ENCODE measurements at regions of chr1 and their contacts with region 1.

Region 1: DNA sequence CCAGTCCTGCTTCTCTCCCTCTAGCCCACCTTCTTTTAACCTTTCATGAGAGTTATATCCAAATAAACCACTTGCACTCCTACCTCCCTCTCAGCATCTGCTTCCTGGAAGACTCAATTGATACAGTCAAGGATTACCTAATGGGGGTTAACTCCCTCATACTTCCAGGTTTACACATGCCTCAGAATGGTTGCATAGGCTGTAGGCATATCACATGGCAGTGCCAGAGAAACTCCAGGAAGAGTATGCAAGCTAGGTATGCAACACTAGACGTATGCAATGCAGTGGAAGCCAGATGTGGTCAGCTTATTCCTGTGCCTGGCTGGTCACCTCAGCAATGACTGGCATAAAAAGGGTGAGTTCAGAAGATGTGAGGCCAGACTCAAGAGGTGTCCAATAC is 32.7 kb upstream of the VANGL1 start:
- DNase-seq: no peak
- ATAC-seq: no peak

Region 2: DNA sequence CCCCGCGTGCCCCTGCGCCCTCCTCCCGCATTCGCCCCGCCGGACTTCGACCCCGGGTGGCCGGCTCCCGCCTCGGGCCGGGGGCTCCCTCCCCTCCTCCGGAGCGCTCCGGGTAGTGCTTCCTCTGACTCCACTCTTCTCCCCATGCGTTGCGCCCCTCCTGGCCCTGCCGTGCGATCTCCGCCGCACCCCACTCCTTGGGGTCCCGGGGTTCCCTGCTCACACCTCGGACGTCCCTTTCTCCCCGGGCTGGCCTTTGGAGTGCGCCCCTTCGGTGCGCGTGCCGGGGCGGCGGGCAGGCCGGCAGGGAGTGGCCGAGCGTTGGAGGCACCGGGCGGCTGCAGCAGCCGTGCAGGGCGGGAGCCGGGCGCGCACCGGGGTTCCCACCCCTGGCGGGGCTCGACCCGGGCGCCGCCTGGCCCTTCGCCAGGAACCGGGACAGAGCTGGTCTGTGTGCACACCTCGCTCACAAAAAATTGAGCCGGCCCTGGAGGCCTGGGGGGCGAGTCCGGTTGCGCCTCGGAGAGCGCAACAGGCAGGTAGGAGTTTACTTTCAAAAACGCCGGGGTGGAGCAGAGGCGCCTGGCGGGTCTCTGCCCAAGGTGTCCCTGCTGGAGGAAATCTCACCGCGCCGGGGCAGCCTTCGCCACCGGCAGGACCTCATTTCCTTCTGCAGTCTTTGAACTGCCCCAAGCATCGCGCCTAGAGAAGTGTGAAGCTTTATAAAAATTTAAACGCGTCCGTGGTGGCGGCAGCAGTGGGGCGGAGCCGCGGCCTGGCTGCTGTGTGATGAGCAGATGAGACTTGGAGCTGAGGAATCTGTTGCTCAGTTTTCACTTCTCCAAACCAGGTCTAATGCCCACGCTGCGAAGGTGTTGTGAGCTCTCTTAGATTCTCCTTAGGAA is 33.4 kb after region 1 on chr1:
- intact Hi-C with region 1: loop called (anchors 5 kb)
- DNase-seq: no peak
- ATAC-seq: peak; percentile 65

Region 3: DNA sequence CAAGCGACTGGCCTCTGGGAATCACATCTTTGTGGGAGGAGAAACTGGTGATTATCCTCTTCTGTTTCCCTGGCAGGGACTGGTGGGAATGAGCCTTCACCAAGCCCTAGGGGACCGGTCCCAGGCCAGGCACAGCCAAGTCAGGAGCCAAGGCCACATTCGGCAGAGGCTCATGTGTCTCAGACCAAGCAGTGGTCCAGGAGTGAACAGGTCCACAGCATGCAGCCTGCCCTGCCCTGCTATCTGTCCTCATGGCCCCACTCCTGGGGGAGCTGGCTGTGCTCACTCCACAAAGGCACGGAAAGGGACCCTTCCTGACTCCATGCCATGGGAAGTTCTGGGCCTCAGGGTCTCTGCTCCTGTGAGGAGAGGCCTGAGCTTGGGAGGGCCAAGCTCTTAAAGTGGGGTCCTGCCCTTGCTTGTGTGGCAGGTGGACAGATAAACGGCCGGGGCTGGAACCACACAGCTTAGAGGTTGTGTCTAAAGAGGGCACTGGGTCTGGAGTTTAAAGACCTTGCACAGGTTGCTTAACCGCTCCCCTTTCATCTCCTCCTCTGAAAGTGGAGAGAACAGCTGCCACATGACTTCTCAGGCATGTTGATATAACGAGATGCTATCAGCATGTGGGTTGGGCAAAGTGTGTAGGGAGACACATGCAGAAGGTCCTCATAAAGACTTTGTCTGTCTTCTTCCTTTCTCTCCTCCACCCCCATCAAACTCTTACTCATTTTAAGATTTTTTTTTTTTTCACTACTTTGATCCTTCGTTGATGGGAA is 102.0 kb after region 1 on chr1:
- intact Hi-C with region 1: loop called (anchors 1 kb)
- DNase-seq: no peak
- ATAC-seq: peak; percentile 21

Region 4: DNA sequence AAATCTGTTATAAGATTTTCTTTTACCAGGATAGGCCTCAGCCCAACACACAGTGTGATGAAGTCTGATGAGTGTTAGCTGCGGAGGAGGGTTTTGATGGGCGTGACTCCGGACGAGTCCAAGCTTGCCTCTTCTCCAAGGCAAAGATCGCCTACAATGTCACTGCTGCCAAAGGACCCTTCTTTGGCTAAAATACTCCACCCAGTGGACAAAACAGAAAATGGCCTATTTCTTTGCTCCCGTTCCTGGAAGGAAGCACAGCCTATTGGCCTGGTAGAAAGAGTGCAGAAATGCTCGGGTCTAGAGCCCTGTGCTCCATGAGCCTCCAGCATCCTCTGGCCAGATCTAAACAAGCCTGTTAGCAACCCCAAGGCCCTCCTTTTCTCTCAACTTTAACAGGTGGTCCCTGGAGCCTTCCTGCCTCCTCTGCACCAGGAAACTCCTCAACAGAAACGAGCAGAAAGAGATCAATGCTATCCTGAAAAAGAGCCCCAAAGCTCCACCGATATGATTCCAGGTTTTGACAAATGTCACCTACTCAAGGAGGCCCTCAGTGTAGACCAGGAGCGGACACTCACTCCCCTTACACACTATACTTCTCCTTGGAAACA is 162.9 kb after region 1 on chr1:
- intact Hi-C with region 1: loop called (anchors 1 kb)
- DNase-seq: no peak
- ATAC-seq: peak; percentile 85

Region 5: DNA sequence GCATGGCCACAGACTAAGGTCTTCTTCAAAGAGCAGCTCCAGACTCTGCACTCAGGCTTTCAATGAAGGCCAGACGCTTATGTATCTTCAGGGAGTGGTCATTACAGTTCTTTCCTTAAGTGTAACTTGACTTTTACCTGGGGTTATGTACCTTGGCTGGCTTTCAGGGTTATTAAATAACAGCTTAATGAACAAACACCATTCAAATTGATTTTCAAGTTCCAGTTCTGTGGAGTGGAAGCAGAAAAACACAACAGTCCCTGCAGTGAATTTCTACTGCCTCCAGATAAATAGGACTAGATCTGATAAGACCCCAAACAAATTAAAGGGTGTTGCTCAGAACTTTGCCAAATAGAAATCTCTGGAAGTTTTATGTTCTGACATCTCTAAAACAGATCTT is 343.6 kb after region 1 on chr1:
- intact Hi-C with region 1: no loop called
- DNase-seq: no peak
- ATAC-seq: no peak

Measured in Right ventricle myocardium inferior (tissue), 1 donor.